Naive thymus-derived CD4-positive, alpha-beta T cell (primary cell): ENCODE measurements at regions of chrX and their contacts with region 1.

Region 1: DNA sequence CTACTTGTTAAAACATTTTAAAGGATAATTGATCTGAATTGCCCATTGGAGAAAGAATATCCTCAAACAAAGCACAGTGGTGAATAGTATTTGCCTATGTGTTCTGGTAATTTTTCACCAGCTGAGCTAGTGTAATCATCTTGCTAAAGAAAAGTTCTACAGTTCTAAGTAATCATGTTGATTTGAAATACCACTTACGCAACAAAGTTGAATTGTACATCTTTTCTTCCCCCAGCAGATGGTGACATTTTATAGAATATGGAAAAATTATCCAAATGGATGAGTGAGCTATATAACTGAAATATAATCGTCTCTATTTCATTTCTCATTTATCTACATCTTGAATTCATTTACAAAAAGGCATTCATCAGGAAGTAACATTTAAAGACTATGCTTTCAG is 9.7 kb upstream of the ZNF674 start:
- DNase-seq: no peak
- ATAC-seq: no peak
- H3K4me3 ChIP-seq: no peak overlapping the region
- H3K4me3 Mint-ChIP-seq: no peak overlapping the region
- H3K27ac ChIP-seq: no peak overlapping the region
- H3K27ac Mint-ChIP-seq: no peak overlapping the region
- H3K4me1 ChIP-seq: no peaks in the 10 kb centered on the region
- H3K4me1 Mint-ChIP-seq: no peaks in the 10 kb centered on the region
- H3K27me3 ChIP-seq: no peaks in the 10 kb centered on the region
- H3K27me3 Mint-ChIP-seq: no peaks in the 10 kb centered on the region

Region 2: GRCh38 chrX:46686003-46686645 is 131.2 kb after region 1 on chrX:
- CTCF ChIA-PET with region 1: no interaction called
- POLR2A ChIA-PET with region 1: no interaction called
- intact Hi-C with region 1: loop called in 1 of 2 experiments (anchors 1 kb)
- DNase-seq: peak in 6 of 9 donors; percentile 5 to 42 (median 28)
- ATAC-seq: peak; percentile 54
- H3K4me3 ChIP-seq: no peak overlapping the region
- H3K4me3 Mint-ChIP-seq: no peak overlapping the region
- H3K27ac ChIP-seq: no peak overlapping the region
- H3K27ac Mint-ChIP-seq: no peak overlapping the region
- H3K4me1 ChIP-seq: no peaks in the 10 kb centered on the region
- H3K4me1 Mint-ChIP-seq: peaks cover 0 to 15% (median 0%) of the 10 kb centered on the region in 7 donors
- H3K27me3 ChIP-seq: no peaks in the 10 kb centered on the region
- H3K27me3 Mint-ChIP-seq: no peaks in the 10 kb centered on the region

Region 3: DNA sequence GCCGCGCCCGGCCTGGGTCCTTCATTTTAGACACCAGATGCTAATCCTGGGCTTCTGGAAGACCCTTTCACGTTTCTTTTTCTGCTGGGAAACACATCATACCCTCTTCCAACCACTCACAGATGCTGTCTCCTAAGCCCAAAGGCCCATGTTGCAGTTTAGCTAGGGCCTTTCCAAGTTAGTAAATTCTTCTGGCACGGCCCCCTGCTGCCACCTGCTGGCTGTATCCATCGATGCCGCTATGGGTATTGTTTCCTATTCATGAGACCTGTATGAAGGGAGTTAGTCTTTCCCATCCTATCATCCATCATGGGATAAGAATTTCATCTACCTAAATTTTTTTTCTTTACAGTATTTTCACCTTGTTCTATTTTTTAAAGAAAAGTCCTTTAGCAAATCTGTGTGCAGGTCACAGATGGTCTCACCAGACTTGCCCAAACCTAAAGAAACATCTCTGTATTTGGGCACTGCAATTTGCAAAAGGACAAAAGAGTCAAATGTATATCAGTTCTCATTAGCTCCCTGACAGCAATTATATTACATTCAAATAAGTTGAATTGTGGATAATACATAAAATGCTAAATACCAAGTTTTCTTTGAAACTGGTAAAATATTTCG is 241.7 kb after region 1 on chrX:
- CTCF ChIA-PET with region 1: no interaction called
- POLR2A ChIA-PET with region 1: no interaction called
- intact Hi-C with region 1: loop called in 1 of 2 experiments (anchors 1 kb)
- DNase-seq: peak; percentile 25 to 67 (median 52)
- ATAC-seq: peak; percentile 76
- H3K4me3 ChIP-seq: no peak overlapping the region
- H3K4me3 Mint-ChIP-seq: no peak overlapping the region
- H3K27ac ChIP-seq: no peak overlapping the region
- H3K27ac Mint-ChIP-seq: no peak overlapping the region
- H3K4me1 ChIP-seq: no peaks in the 10 kb centered on the region
- H3K4me1 Mint-ChIP-seq: peaks cover 0 to 19% (median 6%) of the 10 kb centered on the region in 7 donors
- H3K27me3 ChIP-seq: no peaks in the 10 kb centered on the region
- H3K27me3 Mint-ChIP-seq: peaks cover 0 to 6% (median 0%) of the 10 kb centered on the region in 5 donors